Caco-2 (cell line): ENCODE measurements at regions of chr1 and their contacts with region 1.

Region 1: DNA sequence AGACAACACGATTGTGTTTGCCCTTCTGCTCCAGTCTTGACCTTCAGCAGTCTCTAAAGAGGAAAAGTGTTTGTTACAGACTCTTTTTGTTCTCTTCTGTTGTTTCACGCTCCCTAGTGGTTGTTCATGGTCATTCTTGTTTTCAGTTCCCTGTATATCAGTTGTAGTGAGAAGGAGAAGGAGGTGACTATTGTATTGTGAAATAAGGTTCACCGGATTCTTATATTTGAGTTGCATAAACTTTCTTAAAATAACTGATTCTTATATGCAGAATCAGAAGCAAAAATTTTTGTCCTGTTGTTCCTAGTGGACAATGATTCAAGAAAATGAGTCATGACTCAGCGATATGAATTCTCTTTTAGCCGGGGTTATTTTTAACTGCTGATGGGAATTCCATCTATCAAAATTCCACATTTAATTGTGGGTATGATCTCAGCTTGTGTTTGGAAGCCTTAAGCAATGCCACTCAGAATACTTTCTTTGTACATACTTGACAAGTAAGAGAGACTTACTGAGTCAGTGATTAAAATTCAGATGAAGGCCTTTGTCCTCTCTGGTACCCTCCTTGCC is 152.2 kb downstream of the CLEC20A start:
- DNase-seq: peak in 1 of 2 experiments; percentile 19
- H3K4me3 ChIP-seq: no peak overlapping the region
- H3K4me3 Mint-ChIP-seq: no peak overlapping the region
- H3K27ac Mint-ChIP-seq: peak overlapping the region; percentile 79
- H3K4me1 ChIP-seq: peaks cover 30% of the 10 kb centered on the region
- H3K4me1 Mint-ChIP-seq: peaks cover 35% of the 10 kb centered on the region
- H3K27me3 ChIP-seq: no peaks in the 10 kb centered on the region
- H3K27me3 Mint-ChIP-seq: no peaks in the 10 kb centered on the region
- CTCF ChIP-seq: peak; percentile 25 to 29

Region 2: GRCh38 chr1:178324003-178324402 is 20.6 kb before region 1 on chr1:
- CTCF ChIA-PET with region 1: interaction called, 3 read pairs
- POLR2A ChIA-PET with region 1: no interaction called
- intact Hi-C with region 1: loop called (anchors 2 kb)
- DNase-seq: no peak
- H3K4me3 ChIP-seq: no peak overlapping the region
- H3K4me3 Mint-ChIP-seq: no peak overlapping the region
- H3K27ac Mint-ChIP-seq: no peak overlapping the region
- H3K4me1 ChIP-seq: no peaks in the 10 kb centered on the region; the same call in 1 of the 2 replicates
- H3K4me1 Mint-ChIP-seq: peaks cover 8% of the 10 kb centered on the region
- H3K27me3 ChIP-seq: no peaks in the 10 kb centered on the region
- H3K27me3 Mint-ChIP-seq: no peaks in the 10 kb centered on the region
- CTCF ChIP-seq: no peak